Panc1 (cell line): ENCODE measurements at regions of chr4 and their contacts with region 1.

Region 1: DNA sequence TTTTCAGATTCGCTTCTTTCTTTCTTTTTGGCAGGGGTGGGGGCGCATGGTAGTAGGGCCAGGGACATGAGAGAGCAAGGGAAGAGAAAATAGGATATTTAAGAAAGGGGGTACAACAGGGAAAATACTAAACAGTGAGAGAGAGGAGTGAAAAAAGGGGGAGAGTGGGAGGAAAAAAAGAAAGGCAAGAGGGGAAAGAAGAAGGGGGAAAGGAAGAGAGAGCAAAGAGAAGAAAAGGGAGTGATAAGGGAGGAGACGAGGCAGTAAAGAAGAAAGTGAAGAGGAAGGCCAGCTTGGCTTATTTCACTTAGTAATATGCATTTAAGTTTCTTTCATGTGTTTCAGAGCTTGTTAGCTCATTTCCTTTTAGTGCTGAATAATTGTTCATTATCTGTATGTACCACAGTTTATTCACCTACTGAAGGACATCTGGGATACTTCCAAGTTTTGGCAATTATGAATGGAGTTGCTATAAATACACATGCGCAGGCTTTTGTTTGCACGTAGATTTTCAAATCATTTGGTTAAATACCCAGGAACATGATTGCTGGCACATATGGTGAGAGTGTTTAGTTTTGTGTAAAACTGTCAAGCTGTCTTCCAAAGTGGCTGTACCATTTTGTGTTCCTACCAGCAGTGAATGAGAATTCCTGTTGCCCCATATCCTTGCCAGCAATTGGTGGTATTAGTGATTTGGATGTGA is 37.3 kb downstream of the CASP6 start:
- DNase-seq: no peak
- ATAC-seq: no peak
- H3K4me3 ChIP-seq: no peak overlapping the region
- H3K27ac ChIP-seq: no peak overlapping the region
- H3K4me1 ChIP-seq: no peaks in the 10 kb centered on the region
- H3K27me3 ChIP-seq: no peaks in the 10 kb centered on the region
- CTCF ChIP-seq: no peak

Region 2: DNA sequence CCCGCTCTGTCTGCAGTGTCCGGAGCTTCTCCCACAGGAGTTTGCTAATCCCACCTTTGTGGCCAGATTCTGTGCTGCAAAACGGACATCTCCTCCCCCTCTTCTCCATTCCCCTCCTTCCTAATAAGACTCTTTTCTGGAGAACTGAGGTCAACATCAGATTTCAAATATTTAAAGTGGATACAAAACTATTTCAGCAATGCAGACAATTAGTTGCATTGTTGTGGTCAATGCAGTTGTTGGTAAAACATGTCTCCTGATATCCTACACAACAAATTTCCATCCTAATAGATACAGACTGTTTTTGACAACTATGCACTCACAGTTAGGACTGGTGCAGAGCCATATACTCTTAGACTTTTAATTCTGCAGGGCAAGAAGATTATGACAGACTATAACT is 111.0 kb before region 1 on chr4:
- CTCF ChIA-PET with region 1: no interaction called
- POLR2A ChIA-PET with region 1: interaction called, 11 read pairs
- in situ Hi-C with region 1: no loop called
- intact Hi-C with region 1: no loop called
- DNase-seq: no peak
- ATAC-seq: no peak
- H3K4me3 ChIP-seq: no peak overlapping the region
- H3K27ac ChIP-seq: no peak overlapping the region
- H3K4me1 ChIP-seq: no peaks in the 10 kb centered on the region; the same call in 1 of the 2 replicates
- H3K27me3 ChIP-seq: no peaks in the 10 kb centered on the region
- CTCF ChIP-seq: no peak

Region 3: GRCh38 chr4:109947457-109947856 is 281.5 kb after region 1 on chr4:
- CTCF ChIA-PET with region 1: no interaction called
- POLR2A ChIA-PET with region 1: no interaction called
- in situ Hi-C with region 1: no loop called
- intact Hi-C with region 1: no loop called
- DNase-seq: no peak
- ATAC-seq: no peak
- H3K4me3 ChIP-seq: no peak overlapping the region
- H3K27ac ChIP-seq: no peak overlapping the region
- H3K4me1 ChIP-seq: no peaks in the 10 kb centered on the region
- H3K27me3 ChIP-seq: no peaks in the 10 kb centered on the region
- CTCF ChIP-seq: no peak

Region 4: DNA sequence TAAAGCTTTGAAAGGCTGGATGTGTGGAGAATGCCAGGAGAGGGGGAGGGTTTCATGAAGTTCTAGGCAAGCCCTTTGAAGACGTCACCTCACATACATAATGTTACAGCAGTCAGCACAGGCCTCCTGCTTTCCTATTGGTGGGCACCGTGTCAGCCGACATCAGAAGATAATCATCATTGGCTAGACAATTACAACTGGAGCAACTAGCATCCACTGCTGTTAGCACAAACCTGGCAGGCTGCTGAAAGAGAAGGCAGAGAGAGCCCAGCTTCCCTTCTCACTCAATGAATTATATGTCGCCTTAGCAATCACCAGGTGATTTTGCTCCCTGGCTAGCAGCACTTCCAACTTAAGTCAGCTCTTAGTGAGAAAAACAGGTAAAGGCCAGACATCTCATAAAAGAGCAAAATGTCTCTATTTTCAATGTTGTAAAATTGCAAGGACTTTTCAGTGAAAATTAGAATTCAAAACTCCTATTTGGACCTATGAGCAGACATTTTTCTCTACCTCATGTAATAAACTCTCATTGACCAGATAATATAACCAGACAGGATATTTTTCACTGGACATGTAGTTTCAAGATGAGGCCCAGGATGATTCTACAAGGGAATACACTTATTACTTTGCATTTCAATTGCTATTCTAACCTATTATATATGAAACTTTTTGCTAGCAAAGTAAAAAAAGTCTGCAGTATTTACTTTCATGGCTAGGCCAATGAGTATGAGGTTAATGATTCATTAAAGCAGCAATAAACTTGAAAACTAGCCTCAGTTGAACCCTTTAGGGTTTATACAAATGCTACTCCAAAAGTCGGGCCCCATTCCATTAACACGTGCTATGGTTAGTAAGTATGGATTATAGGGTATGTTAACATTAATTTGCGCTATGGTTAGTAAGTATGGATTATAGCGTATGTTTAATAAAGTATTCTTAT is 528.2 kb after region 1 on chr4:
- CTCF ChIA-PET with region 1: no interaction called
- POLR2A ChIA-PET with region 1: no interaction called
- in situ Hi-C with region 1: no loop called
- intact Hi-C with region 1: no loop called
- DNase-seq: no peak
- ATAC-seq: no peak
- H3K4me3 ChIP-seq: no peak overlapping the region
- H3K27ac ChIP-seq: no peak overlapping the region
- H3K4me1 ChIP-seq: no peaks in the 10 kb centered on the region; the same call in 1 of the 2 replicates
- H3K27me3 ChIP-seq: no peaks in the 10 kb centered on the region
- CTCF ChIP-seq: no peak